Endothelial cell of umbilical vein (primary cell): ENCODE measurements at regions of chr2 and their contacts with region 1.

Region 1: DNA sequence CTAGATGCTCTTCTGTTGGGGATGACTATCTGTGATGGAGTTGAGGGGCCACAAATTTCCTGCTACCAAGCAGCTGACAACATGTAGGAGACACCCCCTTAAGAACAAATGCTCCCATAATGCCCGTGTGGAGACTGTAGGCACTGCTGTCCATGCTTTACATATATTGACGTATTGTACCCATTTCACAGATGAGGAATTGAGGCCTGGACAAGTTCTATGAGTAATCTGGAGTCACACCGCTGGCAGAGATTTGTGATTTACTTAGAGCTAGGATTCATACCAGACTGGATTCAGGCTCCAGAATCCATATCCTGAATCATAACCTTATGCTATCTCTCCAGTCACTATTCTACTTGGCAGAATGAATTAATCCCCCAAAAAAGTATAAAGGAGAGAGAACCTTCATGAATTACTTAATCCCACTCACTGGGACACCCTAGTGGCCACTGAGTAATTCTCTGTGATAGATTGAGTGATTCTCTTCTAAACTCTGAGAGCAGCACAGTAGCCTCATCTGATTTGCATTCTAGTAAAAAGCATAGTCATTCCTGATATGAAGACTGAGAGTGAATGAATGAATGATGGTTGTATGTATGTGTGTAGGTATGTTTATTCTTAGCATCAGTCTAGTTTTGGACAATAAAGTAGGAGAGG is 460.7 kb upstream of the MEIS1 start:
- DNase-seq: no peak
- H3K4me3 ChIP-seq: no peak overlapping the region
- H3K27ac ChIP-seq: no peak overlapping the region
- H3K4me1 ChIP-seq: no peaks in the 10 kb centered on the region
- H3K27me3 ChIP-seq: no peaks in the 10 kb centered on the region
- CTCF ChIP-seq: no peak
- POLR2A ChIP-seq: no peak

Region 2: DNA sequence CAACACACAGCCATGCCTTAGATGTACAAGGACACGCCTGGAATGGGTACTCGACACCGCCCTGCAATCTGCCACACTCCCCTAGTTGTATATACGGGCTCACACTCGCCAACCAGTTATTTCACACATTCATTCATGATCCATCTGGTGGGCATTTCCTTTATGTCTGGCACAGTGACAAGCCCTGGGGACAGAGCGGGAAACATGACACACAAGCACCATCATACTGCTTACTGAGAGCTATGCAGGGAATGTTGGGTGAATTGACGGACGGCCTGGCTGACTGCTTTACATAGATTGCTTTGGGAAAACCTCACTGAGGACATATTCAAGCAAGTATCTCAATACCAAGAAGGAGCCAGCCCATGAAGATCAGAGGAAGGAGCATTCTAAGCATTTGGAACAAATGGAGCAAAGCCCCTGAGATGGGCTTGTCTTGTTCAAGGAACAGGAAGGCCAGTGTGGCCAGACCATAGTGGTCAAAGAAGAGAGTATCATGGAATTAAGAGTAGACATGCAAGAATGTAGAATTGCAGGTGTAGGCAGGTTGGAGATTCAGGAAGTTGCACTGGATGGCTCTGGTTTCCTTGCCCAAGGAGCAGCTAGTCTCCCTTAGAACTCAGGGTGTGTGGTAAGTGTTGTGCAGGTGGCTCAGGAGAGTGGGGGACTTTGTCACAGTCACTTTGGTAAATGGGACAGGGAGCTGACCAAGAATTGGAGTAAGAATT is 93.6 kb before region 1 on chr2:
- CTCF ChIA-PET with region 1: no interaction called
- POLR2A ChIA-PET with region 1: no interaction called
- dilution Hi-C with region 1: no loop called
- intact Hi-C with region 1: loop called (anchors 10 kb)
- DNase-seq: no peak
- H3K4me3 ChIP-seq: no peak overlapping the region
- H3K27ac ChIP-seq: no peak overlapping the region
- H3K4me1 ChIP-seq: no peaks in the 10 kb centered on the region
- H3K27me3 ChIP-seq: no peaks in the 10 kb centered on the region
- CTCF ChIP-seq: no peak
- POLR2A ChIP-seq: no peak